ENCODE measurements at regions of chrX and their contacts with region 1.

Region 1: DNA sequence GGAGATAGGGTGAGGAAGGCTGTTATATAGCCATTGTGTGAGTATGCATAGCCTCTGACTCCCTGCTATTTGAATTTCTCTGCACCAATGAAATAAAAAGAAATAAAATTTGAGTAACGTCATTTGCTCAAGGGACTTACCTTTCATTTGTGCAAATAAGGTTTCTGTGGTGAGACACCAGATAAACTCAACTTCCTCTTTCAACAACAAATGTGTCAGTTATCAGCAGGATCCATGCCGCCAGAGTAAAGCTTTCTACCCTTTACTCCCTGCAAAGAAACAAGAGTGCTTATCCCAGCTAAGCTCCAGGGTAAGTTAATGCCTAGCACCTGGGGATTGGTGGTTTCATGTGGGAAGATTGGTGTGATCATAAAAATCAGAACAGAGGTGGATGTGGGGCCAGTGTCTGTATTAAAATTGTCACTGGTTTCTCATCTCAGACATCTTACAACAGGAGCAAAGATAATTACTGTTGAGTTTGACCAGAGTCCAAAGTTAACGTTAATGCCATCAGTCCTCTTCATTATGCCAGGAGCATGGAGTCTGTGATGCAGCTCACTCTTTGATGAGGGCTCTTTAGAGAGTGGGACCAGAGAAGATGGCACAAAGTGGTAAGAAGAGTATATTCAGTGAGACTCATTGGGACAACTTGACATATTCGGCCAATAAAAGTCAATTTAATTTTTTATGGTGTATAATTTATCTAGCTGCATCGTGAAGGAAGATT is at the start of gene P2RY10:
- DNase-seq: peak in 1 of 2 donors; percentile 81
- ATAC-seq: peak; percentile 80 to 84 (median 83)
- H3K4me3 ChIP-seq: peak within 1 kb of the TSS; percentile 71
- H3K4me3 Mint-ChIP-seq: peak within 1 kb of the TSS; percentile 88
- H3K27ac ChIP-seq: peak within 1 kb of the TSS; percentile 80
- H3K27ac Mint-ChIP-seq: peak within 1 kb of the TSS; percentile 90 to 93
- H3K4me1 ChIP-seq: peaks cover 4% of the 10 kb centered on the region
- H3K4me1 Mint-ChIP-seq: peaks cover 45 to 52% of the 10 kb centered on the region in 2 donors
- H3K27me3 ChIP-seq: no peaks in the 10 kb centered on the region
- H3K27me3 Mint-ChIP-seq: peaks cover 4 to 18% of the 10 kb centered on the region in 2 donors
- CTCF ChIP-seq: no peak
- total RNA-seq, gene P2RY10: 17.4 to 21.5 (median 19.7) TPM

Region 2: DNA sequence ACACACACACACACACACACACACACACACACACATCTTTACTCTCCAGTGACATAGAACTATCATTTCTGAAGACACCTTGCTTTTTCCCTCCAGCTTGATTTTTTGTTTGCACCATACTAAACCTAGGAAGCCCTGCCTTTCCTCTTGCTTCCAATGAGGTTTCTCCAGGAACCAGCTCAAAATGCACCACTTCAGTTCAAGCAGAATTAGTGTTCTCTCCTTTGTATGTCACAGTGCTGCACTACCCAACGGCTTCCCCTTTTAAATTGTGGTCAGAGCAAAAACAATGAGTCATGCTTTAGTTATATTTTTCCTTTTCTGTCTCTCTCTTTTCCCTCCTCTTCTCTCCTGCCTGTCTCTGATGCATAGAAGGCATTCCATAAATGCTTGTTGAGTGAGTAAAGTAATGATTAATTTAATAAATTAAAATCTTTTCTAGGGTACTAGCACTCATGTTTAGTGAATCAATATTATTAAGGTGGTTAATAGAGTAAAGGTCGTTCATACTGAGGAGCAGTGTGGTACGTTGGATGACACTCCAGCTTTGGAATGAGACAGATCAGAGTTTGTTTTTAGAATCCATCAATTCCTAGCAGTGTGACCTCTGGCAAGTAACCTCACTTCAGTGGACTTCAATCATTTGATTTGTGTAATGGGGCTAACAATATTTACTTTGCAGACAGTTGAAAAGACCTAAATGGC is 292.1 kb before region 1 on chrX:
- intact Hi-C with region 1: loop called (anchors 10 kb)
- DNase-seq: peak in 1 of 2 donors; percentile 9
- ATAC-seq: peak; percentile 30 to 49 (median 48)
- H3K4me3 ChIP-seq: no peak overlapping the region
- H3K4me3 Mint-ChIP-seq: no peak overlapping the region
- H3K27ac ChIP-seq: no peak overlapping the region
- H3K27ac Mint-ChIP-seq: no peak overlapping the region
- H3K4me1 ChIP-seq: peaks cover 9% of the 10 kb centered on the region
- H3K4me1 Mint-ChIP-seq: peaks cover 23 to 30% of the 10 kb centered on the region in 2 donors
- H3K27me3 ChIP-seq: no peaks in the 10 kb centered on the region
- H3K27me3 Mint-ChIP-seq: peaks cover 6 to 20% of the 10 kb centered on the region in 2 donors
- CTCF ChIP-seq: no peak

Region 3: GRCh38 chrX:79170476-79171035 is 225.2 kb after region 1 on chrX:
- intact Hi-C with region 1: no loop called
- DNase-seq: peak in 1 of 2 donors; percentile 44
- ATAC-seq: no peak
- H3K4me3 ChIP-seq: no peak overlapping the region
- H3K4me3 Mint-ChIP-seq: no peak overlapping the region
- H3K27ac ChIP-seq: peak overlapping the region; percentile 59
- H3K27ac Mint-ChIP-seq: peak overlapping the region; percentile 73 to 96
- H3K4me1 ChIP-seq: peaks cover 15% of the 10 kb centered on the region
- H3K4me1 Mint-ChIP-seq: peaks cover 51 to 54% of the 10 kb centered on the region in 2 donors
- H3K27me3 ChIP-seq: no peaks in the 10 kb centered on the region
- H3K27me3 Mint-ChIP-seq: peaks cover 0 to 14% of the 10 kb centered on the region in 2 donors
- CTCF ChIP-seq: no peak

Measured in natural killer cell (primary cell).